Dendritic cell treated with granulocyte-macrophage colony-stimulating factor and Interleukin-4, amounts not matched to agents 40 ng/mL and 50 ng/mL, for 4 days (primary cell): ENCODE measurements at regions of chr3 and their contacts with region 1.

Region 1: GRCh38 chr3:64533617-64534317 is 154.0 kb downstream of the ADAMTS9 start:
- H3K4me3 Mint-ChIP-seq: no peak overlapping the region
- H3K27ac Mint-ChIP-seq: no peak overlapping the region
- H3K4me1 Mint-ChIP-seq: no peaks in the 10 kb centered on the region
- H3K27me3 Mint-ChIP-seq: no peaks in the 10 kb centered on the region

Region 2: GRCh38 chr3:64382153-64382552 is 151.6 kb before region 1 on chr3:
- intact Hi-C with region 1: no loop called
- H3K4me3 Mint-ChIP-seq: no peak overlapping the region
- H3K27ac Mint-ChIP-seq: no peak overlapping the region
- H3K4me1 Mint-ChIP-seq: no peaks in the 10 kb centered on the region
- H3K27me3 Mint-ChIP-seq: no peaks in the 10 kb centered on the region

Region 3: GRCh38 chr3:65732051-65732935 is 1198.5 kb after region 1 on chr3:
- intact Hi-C with region 1: loop called (anchors 5 kb)
- H3K4me3 Mint-ChIP-seq: no peak overlapping the region
- H3K27ac Mint-ChIP-seq: no peak overlapping the region
- H3K4me1 Mint-ChIP-seq: no peaks in the 10 kb centered on the region
- H3K27me3 Mint-ChIP-seq: no peaks in the 10 kb centered on the region